IMR-90 (cell line): ENCODE measurements at regions of chrX and their contacts with region 1.

Region 1: GRCh38 chrX:48083212-48083611 is 11.8 kb upstream of the ZNF630 start:
- DNase-seq: peak; percentile 34
- ATAC-seq: peak; percentile 94
- H3K4me3 ChIP-seq: no peak overlapping the region
- H3K27ac ChIP-seq: no peak overlapping the region
- H3K4me1 ChIP-seq: no peaks in the 10 kb centered on the region
- H3K27me3 ChIP-seq: peaks cover 9% of the 10 kb centered on the region
- CTCF ChIP-seq: peak; percentile 62
- POLR2A ChIP-seq: no peak
- RAD21 ChIP-seq: peak; percentile 64

Region 2: DNA sequence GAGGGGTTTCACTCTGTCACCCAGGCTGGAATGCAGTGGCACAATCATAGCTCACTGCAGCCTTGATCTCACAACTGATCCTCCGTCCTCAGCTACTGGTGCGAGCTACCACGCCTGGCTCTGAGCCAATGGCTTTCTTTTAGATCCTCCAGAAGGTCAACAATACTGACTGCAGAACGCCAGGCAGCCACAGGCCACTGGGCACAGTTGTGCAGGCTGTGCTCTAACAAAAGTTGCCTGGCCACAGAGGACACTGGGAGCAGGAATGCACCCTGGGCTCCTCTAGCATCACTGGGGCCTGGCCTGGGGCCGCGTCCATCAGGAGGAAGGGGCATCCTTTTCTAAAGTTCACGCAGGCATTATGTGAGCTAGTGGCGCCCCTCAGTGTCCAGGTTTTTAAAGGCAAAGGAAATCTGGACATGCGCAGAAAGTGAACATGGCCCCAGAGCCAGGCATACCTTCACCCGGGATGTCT is 410.7 kb after region 1 on chrX:
- CTCF ChIA-PET with region 1: no interaction called
- POLR2A ChIA-PET with region 1: no interaction called
- dilution Hi-C with region 1: no loop called
- in situ Hi-C with region 1: loop called (anchors 10 kb)
- intact Hi-C with region 1: loop called (anchors 2 kb)
- DNase-seq: peak; percentile 38
- ATAC-seq: peak; percentile 55
- H3K4me3 ChIP-seq: no peak overlapping the region
- H3K27ac ChIP-seq: no peak overlapping the region
- H3K4me1 ChIP-seq: peaks cover 6% of the 10 kb centered on the region
- H3K27me3 ChIP-seq: no peaks in the 10 kb centered on the region
- CTCF ChIP-seq: peak; percentile 52
- POLR2A ChIP-seq: no peak
- RAD21 ChIP-seq: peak; percentile 59

Region 3: GRCh38 chrX:48521353-48522243 is 438.4 kb after region 1 on chrX and contains the start of gene EBP:
- CTCF ChIA-PET with region 1: no interaction called
- POLR2A ChIA-PET with region 1: no interaction called
- dilution Hi-C with region 1: no loop called
- in situ Hi-C with region 1: no loop called
- intact Hi-C with region 1: no loop called
- DNase-seq: peak; percentile 77
- ATAC-seq: peak; percentile 100
- H3K4me3 ChIP-seq: peak within 1 kb of the TSS; percentile 63
- H3K27ac ChIP-seq: peak within 1 kb of the TSS; percentile 47
- H3K4me1 ChIP-seq: 0 out of 2 replicates have a peak, but pooled peaks cover 2% of the 10 kb centered on the region
- H3K27me3 ChIP-seq: no peaks in the 10 kb centered on the region
- CTCF ChIP-seq: no peak
- POLR2A ChIP-seq: peak; percentile 35; the same call in 1 of the 2 replicates
- RAD21 ChIP-seq: no peak
- total RNA-seq, gene EBP: 66.7 and 78.9 TPM in 2 replicates